ENCODE measurements at regions of chr19 and their contacts with region 1.

Region 1: GRCh38 chr19:30227661-30228428 is 144.3 kb upstream of the ZNF536 start:
- DNase-seq: peak; percentile 61 to 86 (median 84)
- ATAC-seq: peak; percentile 73 to 84
- H3K4me3 ChIP-seq: peak overlapping the region; percentile 57
- H3K27ac ChIP-seq: peak overlapping the region; percentile 1
- H3K4me1 ChIP-seq: no peaks in the 10 kb centered on the region
- H3K27me3 ChIP-seq: no peaks in the 10 kb centered on the region

Region 2: DNA sequence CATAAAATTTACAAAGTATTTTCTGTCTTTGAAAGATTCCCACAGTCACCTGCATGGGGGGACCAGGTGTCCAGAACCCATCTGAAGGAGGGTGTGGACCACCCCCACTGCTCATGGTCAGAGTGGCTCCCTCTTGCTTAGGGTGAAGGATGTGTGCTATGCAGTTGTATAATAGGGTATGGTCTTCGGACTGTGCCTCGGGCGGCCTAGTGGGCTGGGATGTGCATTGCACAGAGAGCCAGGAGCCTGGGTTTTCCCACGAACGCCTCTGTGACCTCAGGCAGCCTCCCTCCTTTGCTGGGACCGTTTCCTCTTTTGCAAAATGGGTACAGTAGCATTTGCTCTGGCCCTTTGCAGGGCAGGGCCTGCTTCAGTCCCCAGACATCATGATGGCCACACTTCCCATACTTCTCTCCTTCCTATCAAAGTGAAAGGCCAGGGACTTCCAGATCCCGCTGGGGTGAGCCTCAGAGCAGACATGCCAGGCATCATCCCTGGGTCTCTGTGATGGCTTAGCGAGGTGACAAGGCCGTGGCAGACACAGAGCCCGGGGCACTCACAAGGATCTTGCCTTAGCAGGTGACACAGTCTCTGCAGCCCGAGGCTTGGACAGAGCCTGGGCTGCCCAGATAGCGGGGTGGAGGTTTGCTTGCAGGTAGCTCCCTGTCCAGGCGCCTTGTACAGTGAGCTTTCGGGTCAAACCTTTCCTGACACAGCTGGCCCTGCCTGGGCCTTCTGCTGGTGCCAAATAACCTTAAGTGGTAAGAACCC is 84.9 kb after region 1 on chr19:
- intact Hi-C with region 1: no loop called
- DNase-seq: peak in 1 of 3 donors; percentile 5
- ATAC-seq: no peak
- H3K4me3 ChIP-seq: no peak overlapping the region
- H3K27ac ChIP-seq: no peak overlapping the region
- H3K4me1 ChIP-seq: no peaks in the 10 kb centered on the region
- H3K27me3 ChIP-seq: no peaks in the 10 kb centered on the region

Region 3: DNA sequence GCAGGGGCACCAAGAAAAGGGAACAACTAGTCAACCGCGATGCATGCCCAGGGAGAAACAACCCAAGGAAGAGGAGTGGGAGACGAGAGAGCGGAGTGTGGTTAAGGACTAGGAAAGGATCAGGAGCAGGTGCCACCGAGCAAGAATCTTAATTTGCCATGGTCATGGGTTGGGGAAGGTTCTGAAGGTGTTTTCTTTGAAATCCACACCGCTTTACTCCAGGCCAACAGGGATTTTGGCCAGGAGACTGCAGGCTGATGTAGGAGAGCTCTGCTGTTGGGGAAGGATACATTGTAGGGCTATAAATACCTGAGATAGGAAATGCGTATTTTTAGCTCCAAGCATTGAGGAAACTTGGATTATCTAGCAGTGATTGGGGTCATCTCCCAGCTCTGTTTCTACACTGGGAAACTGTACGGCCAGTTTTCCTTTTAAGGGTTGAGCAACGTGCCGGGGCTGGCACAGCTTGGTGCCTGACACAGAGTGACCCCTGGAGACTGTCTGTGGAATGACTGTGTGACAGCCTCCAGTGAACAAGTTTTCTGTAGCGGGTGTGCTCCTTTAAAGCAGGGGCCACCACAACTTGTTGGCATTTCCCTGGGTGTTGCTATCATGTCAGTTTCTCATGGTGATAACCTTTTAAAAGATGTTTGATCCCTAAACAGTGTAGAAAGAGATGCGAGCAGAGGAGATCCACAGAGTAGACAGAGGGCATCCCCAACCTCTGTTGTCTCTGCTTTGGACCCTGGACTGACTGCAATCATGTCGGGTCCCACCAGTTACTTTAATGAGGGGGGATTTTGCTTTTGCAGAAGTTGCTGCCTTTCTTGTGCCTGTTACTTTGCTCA is 178.6 kb after region 1 on chr19:
- intact Hi-C with region 1: loop called in 3 of 4 experiments (anchors 5 to 10 kb)
- DNase-seq: peak in 1 of 3 donors; percentile 69
- ATAC-seq: peak; percentile 89
- H3K4me3 ChIP-seq: no peak overlapping the region
- H3K27ac ChIP-seq: no peak overlapping the region
- H3K4me1 ChIP-seq: no peaks in the 10 kb centered on the region
- H3K27me3 ChIP-seq: no peaks in the 10 kb centered on the region

Region 4: GRCh38 chr19:30457484-30457883 is 229.6 kb after region 1 on chr19:
- intact Hi-C with region 1: no loop called
- DNase-seq: no peak
- ATAC-seq: no peak
- H3K4me3 ChIP-seq: no peak overlapping the region
- H3K27ac ChIP-seq: no peak overlapping the region
- H3K4me1 ChIP-seq: no peaks in the 10 kb centered on the region
- H3K27me3 ChIP-seq: no peaks in the 10 kb centered on the region

Region 5: GRCh38 chr19:30649934-30650614 is 422.2 kb after region 1 on chr19:
- intact Hi-C with region 1: loop called in 3 of 4 experiments (anchors 5 to 10 kb)
- DNase-seq: no peak
- ATAC-seq: peak in 1 of 2 donors; percentile 44
- H3K4me3 ChIP-seq: no peak overlapping the region
- H3K27ac ChIP-seq: no peak overlapping the region
- H3K4me1 ChIP-seq: no peaks in the 10 kb centered on the region
- H3K27me3 ChIP-seq: peaks cover 2% of the 10 kb centered on the region

Measured in right cardiac atrium (tissue), 5 donors.